RWPE1 (cell line): ENCODE measurements at regions of chr11 and their contacts with region 1.

Region 1: DNA sequence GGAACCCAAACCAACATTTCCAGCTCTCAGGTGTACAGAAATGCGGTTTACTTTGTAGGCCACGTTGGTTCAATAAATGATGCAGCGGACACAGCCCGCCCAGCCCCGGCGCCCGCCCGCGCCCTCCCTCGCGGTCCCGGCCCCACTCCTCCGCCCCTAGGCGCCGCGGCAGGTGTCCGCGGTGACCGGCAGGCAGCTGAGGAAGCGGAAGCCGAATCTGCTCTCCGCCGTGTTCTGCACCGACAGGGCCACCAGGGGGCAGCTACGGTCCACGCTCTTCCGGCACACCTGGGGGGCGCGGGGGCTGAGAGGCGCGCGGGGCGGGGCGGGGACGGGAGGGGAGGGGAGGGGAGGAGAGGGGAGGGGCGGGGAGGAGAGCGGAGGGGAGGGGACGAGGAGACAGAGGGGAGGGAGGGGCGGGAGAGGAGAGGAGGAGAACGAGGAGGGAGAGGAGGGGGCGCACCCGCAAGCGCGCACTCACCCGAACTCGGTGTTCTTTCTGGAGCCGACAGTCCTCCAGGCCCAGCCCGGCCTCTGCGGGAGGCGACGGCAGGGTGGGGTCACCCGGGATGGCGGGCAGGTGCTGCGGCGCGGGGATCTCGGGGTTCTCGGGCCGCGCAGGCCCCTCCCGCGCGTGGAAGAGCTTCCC is 5.6 kb downstream of the LMNTD2 start:
- DNase-seq: no peak
- H3K27ac ChIP-seq: peak overlapping the region; percentile 20; the same call in 1 of the 2 replicates
- CTCF ChIP-seq: peak; percentile 73

Region 2: GRCh38 chr11:540577-541413 is 14.2 kb before region 1 on chr11:
- CTCF ChIA-PET with region 1: interaction called, 10 read pairs
- POLR2A ChIA-PET with region 1: no interaction called
- DNase-seq: no peak
- H3K27ac ChIP-seq: no peak overlapping the region
- CTCF ChIP-seq: no peak

Region 3: GRCh38 chr11:689625-690024 is 134.7 kb after region 1 on chr11:
- CTCF ChIA-PET with region 1: no interaction called
- POLR2A ChIA-PET with region 1: no interaction called
- DNase-seq: no peak
- H3K27ac ChIP-seq: peak overlapping the region; percentile 48
- CTCF ChIP-seq: no peak